Ovary (tissue), 10 donors: ENCODE measurements at regions of chr3 and their contacts with region 1.

Region 1: GRCh38 chr3:110378481-110378880 is 693.1 kb upstream of the NECTIN3 start:
- DNase-seq: no peak
- H3K4me3 ChIP-seq: no peak overlapping the region
- H3K27ac ChIP-seq: no peak overlapping the region
- H3K4me1 ChIP-seq: peaks cover 5% of the 10 kb centered on the region
- H3K27me3 ChIP-seq: no peaks in the 10 kb centered on the region
- CTCF ChIP-seq: no peak
- EP300 ChIP-seq: no peak
- POLR2A ChIP-seq: no peak

Region 2: DNA sequence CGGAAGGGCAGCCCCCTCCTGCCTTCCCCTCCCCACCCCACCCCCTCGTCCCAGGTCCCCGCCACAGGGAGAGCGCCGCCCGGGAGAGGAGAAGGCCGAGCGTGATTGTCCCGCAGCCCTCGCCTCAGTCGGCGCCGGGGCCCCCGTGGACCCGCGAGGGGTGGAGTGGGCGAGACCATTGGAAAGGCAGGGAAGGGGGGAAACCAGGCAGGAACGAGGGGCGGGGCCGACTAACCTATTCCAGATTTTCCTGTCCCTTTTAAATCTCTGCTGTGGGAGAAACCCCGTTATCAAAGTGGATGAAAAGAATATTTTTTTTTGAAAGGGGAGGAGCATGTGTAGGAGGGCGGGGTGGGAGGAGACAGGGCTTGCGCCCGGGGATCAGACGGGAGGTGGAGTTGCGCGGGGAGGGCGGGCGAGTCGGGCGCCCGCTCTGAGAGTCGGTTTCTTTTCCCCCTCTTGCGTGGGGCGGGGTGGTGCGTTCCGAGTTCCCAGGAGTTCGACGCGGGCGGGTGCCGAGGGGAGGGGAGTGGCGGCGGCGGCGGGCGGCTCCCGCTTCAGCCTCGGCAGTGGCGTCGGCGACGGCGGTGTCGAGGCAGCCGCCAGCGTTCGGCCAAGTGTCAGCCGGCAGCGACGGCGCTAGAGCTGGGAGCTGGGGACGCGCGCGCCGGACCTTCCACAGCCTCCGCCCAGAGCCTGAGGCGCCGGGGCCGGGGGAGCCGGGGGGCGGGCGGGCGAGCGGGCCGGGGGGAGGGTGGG is 693.0 kb after region 1 on chr3 and contains the start of gene NECTIN3:
- intact Hi-C with region 1: loop called in 1 of 4 experiments (anchors 10 kb)
- DNase-seq: peak; percentile 93 to 95 (median 95)
- H3K4me3 ChIP-seq: peak within 1 kb of the TSS; percentile 94
- H3K27ac ChIP-seq: peak within 1 kb of the TSS; percentile 88 to 90
- H3K4me1 ChIP-seq: peaks cover 3% of the 10 kb centered on the region
- H3K27me3 ChIP-seq: no peaks in the 10 kb centered on the region
- CTCF ChIP-seq: no peak
- EP300 ChIP-seq: no peak
- POLR2A ChIP-seq: peak; percentile 48
- total RNA-seq, gene NECTIN3: 23.9 to 45.5 (median 36.5) TPM